A673 (cell line): ENCODE measurements at regions of chr18 and their contacts with region 1.

Region 1: GRCh38 chr18:54647176-54647575 is 56.1 kb downstream of the DYNAP start:
- DNase-seq: peak; percentile 32
- H3K4me3 ChIP-seq: no peak overlapping the region
- H3K27ac ChIP-seq: no peak overlapping the region
- H3K4me1 ChIP-seq: no peaks in the 10 kb centered on the region
- H3K27me3 ChIP-seq: peaks cover 17% of the 10 kb centered on the region
- CTCF ChIP-seq: peak; percentile 46

Region 2: GRCh38 chr18:54392543-54393023 is 254.6 kb before region 1 on chr18:
- CTCF ChIA-PET with region 1: no interaction called
- POLR2A ChIA-PET with region 1: no interaction called
- intact Hi-C with region 1: loop called (anchors 10 kb)
- DNase-seq: peak; percentile 82
- H3K4me3 ChIP-seq: no peak overlapping the region
- H3K27ac ChIP-seq: no peak overlapping the region
- H3K4me1 ChIP-seq: peaks cover 15% of the 10 kb centered on the region
- H3K27me3 ChIP-seq: no peaks in the 10 kb centered on the region
- CTCF ChIP-seq: peak; percentile 76

Region 3: DNA sequence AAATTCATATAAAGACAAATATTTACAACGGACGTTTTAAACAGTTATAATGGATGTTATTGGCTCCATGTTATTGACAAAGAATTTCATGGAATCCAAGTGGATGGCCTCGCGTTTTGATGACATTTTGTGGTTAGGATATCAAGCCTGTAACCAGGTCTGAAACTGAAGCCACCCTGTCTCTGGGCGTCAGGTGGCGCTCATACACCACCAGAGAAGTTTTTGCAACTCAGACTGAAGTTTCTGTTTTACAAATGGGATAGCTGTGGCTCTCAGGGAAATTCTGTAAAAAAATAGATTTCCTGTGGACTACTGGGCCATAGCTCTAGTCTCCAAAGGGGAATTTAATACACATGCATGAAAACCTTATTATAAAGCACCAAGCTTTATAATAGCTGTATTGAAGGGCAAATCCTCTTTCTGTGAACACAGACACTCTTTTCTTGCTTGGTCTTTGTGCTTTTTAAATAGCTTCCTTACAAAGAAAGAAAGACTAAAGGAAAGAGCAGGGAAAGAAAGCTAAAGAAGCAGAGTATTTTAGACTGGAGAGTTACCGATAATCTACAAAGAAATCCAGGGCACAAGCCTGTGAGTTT is 202.8 kb before region 1 on chr18:
- CTCF ChIA-PET with region 1: no interaction called
- POLR2A ChIA-PET with region 1: no interaction called
- intact Hi-C with region 1: loop called (anchors 10 kb)
- DNase-seq: peak; percentile 75
- H3K4me3 ChIP-seq: no peak overlapping the region
- H3K27ac ChIP-seq: no peak overlapping the region
- H3K4me1 ChIP-seq: no peaks in the 10 kb centered on the region
- H3K27me3 ChIP-seq: peaks cover 7% of the 10 kb centered on the region
- CTCF ChIP-seq: peak; percentile 83

Region 4: DNA sequence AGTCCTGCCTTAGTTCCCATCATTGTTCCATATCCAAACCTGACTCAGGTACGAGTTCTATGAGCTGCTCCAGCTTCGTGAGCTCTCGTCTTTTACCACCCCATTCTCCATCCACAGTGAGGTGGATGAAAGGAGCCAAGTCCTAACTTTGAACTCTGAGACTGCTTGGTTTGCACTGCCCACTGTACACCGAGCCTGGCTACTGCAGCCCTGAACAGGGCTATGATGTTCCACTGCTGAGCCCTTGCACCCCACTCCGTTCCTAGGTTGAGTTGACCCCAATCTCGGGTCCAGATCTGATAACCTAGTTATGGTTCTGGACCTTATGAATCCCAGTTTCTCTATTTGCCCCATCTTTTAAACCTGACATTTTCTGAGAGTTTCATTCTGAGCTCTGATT is 61.4 kb before region 1 on chr18:
- CTCF ChIA-PET with region 1: no interaction called
- POLR2A ChIA-PET with region 1: no interaction called
- intact Hi-C with region 1: no loop called
- DNase-seq: no peak
- H3K4me3 ChIP-seq: no peak overlapping the region
- H3K27ac ChIP-seq: no peak overlapping the region
- H3K4me1 ChIP-seq: no peaks in the 10 kb centered on the region
- H3K27me3 ChIP-seq: peaks cover 33% of the 10 kb centered on the region
- CTCF ChIP-seq: no peak

Region 5: GRCh38 chr18:54636217-54636616 is 11.0 kb before region 1 on chr18:
- CTCF ChIA-PET with region 1: no interaction called
- POLR2A ChIA-PET with region 1: no interaction called
- intact Hi-C with region 1: no loop called
- DNase-seq: no peak
- H3K4me3 ChIP-seq: no peak overlapping the region
- H3K27ac ChIP-seq: no peak overlapping the region
- H3K4me1 ChIP-seq: no peaks in the 10 kb centered on the region
- H3K27me3 ChIP-seq: peaks cover 14% of the 10 kb centered on the region
- CTCF ChIP-seq: no peak